CD8-positive, alpha-beta T cell (primary cell): ENCODE measurements at regions of chr4 and their contacts with region 1.

Region 1: DNA sequence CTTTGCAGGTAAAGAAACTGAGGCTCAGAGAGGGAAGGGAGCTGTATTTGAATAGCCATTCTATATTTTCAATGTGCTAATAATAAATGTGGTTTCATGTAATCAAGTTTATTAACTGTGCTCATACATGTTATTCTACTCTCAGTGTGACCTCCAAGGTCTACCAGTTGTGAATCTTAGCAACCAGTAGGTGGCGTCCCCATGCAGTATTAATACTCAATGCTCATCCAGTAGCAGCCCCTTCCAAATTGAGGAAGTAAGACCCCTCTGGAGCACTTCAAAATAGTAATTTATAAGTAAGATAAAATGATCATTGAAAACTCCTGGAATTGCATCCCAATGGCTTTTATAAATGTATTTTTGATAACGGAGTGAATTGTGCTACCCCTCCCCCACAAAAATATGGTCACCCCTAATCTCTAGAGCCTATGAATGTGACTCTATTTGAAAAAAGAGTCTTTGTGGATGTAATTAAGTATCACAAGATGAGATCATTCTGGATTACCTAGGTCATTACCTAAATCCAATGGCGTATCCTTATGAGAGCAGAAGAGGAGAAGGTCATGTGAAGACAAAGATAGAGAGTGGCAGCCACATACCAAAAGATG is 20.4 kb upstream of the SEPSECS start:
- DNase-seq: peak in 5 of 9 experiments; percentile 27 to 69 (median 40)
- ATAC-seq: peak; percentile 80
- H3K4me3 ChIP-seq: no peak overlapping the region
- H3K4me3 Mint-ChIP-seq: no peak overlapping the region
- H3K27ac ChIP-seq: no peak overlapping the region
- H3K27ac Mint-ChIP-seq: no peak overlapping the region
- H3K4me1 ChIP-seq: peaks cover 16% of the 10 kb centered on the region
- H3K4me1 Mint-ChIP-seq: peaks cover 18% of the 10 kb centered on the region
- H3K27me3 ChIP-seq: no peaks in the 10 kb centered on the region
- H3K27me3 Mint-ChIP-seq: no peaks in the 10 kb centered on the region
- CTCF ChIP-seq: peak; percentile 89

Region 2: GRCh38 chr4:25367004-25367621 is 186.5 kb after region 1 on chr4:
- CTCF ChIA-PET with region 1: interaction called, 5 read pairs
- POLR2A ChIA-PET with region 1: interaction called, 3 read pairs
- intact Hi-C with region 1: loop called (anchors 2 to 5 kb)
- DNase-seq: peak in 2 of 9 experiments; percentile 45 to 59
- ATAC-seq: no peak
- H3K4me3 ChIP-seq: no peak overlapping the region
- H3K4me3 Mint-ChIP-seq: no peak overlapping the region
- H3K27ac ChIP-seq: no peak overlapping the region
- H3K27ac Mint-ChIP-seq: no peak overlapping the region
- H3K4me1 ChIP-seq: no peaks in the 10 kb centered on the region
- H3K4me1 Mint-ChIP-seq: no peaks in the 10 kb centered on the region
- H3K27me3 ChIP-seq: no peaks in the 10 kb centered on the region
- H3K27me3 Mint-ChIP-seq: no peaks in the 10 kb centered on the region
- CTCF ChIP-seq: peak; percentile 65

Region 3: DNA sequence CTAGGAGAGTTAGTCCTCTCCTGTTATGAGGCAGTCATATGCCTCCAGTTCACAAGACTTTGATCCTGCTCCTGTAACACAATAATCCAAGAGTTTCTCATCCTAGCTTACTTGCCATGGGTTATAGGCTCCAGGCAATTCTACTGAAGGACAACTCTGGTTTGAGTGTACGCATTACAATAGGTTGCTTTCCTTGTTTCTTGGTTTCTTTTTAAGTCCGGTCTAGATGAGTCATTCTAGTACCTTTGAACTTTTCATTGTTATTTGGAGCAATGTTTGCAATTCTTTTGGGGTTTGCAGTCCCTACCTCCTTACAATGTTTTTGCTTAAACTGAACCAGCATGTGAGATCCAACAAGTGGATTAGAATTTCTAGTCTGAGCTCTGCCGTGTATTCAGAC is 305.5 kb after region 1 on chr4:
- CTCF ChIA-PET with region 1: no interaction called
- POLR2A ChIA-PET with region 1: no interaction called
- intact Hi-C with region 1: no loop called
- DNase-seq: no peak
- ATAC-seq: no peak
- H3K4me3 ChIP-seq: no peak overlapping the region
- H3K4me3 Mint-ChIP-seq: no peak overlapping the region
- H3K27ac ChIP-seq: no peak overlapping the region
- H3K27ac Mint-ChIP-seq: no peak overlapping the region
- H3K4me1 ChIP-seq: no peaks in the 10 kb centered on the region
- H3K4me1 Mint-ChIP-seq: no peaks in the 10 kb centered on the region
- H3K27me3 ChIP-seq: peaks cover 0 to 3% of the 10 kb centered on the region in 2 experiments
- H3K27me3 Mint-ChIP-seq: peaks cover 6% of the 10 kb centered on the region
- CTCF ChIP-seq: no peak